Activated T-helper 1 cell treated with anti-CD3 and anti-CD28 coated beads, Interleukin-12 subunit alpha, Interleukin-12 subunit beta, Interleukin-2, Interleukin-4 antibody, amounts not matched to agents 30 ng/mL and 10 ng/mL and 1 ng/mL, durations not matched to agents 14 hours and 24 hours and 36 hours (primary cell): ENCODE measurements at regions of chr16 and their contacts with region 1.

Region 1: GRCh38 chr16:77236063-77236511 is 36.9 kb downstream of the SYCE1L start:
- DNase-seq: peak; percentile 79
- H3K4me3 Mint-ChIP-seq: peak overlapping the region; percentile 20
- H3K27ac Mint-ChIP-seq: no peak overlapping the region
- H3K4me1 Mint-ChIP-seq: peaks cover 6% of the 10 kb centered on the region
- H3K27me3 Mint-ChIP-seq: peaks cover 13% of the 10 kb centered on the region

Region 2: DNA sequence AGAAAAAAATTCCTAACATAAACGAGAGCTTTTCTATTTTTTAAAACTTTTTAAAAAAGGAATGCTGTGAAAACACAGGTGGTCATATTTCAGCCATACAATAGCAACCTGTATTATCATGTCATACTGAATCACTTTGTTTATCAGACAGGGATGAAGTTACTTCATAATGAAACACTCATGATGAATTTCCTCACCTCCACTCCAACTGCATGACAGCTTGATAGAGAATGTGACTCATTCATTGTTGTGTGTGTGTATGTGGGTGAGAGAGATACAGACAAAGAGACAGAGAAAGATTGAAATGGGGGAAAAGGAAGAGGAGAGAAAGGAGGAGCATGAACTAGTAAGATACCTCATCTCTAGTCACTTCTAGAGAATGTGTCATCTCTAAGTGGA is 72.1 kb after region 1 on chr16:
- intact Hi-C with region 1: loop called (anchors 1 kb)
- DNase-seq: no peak
- H3K4me3 Mint-ChIP-seq: no peak overlapping the region
- H3K27ac Mint-ChIP-seq: peak overlapping the region; percentile 45
- H3K4me1 Mint-ChIP-seq: peaks cover 9% of the 10 kb centered on the region
- H3K27me3 Mint-ChIP-seq: no peaks in the 10 kb centered on the region

Region 3: GRCh38 chr16:77437859-77438258 is 201.8 kb after region 1 on chr16:
- intact Hi-C with region 1: loop called (anchors 5 kb)
- DNase-seq: no peak
- H3K4me3 Mint-ChIP-seq: no peak overlapping the region
- H3K27ac Mint-ChIP-seq: no peak overlapping the region
- H3K4me1 Mint-ChIP-seq: no peaks in the 10 kb centered on the region
- H3K27me3 Mint-ChIP-seq: peaks cover 29% of the 10 kb centered on the region

Region 4: DNA sequence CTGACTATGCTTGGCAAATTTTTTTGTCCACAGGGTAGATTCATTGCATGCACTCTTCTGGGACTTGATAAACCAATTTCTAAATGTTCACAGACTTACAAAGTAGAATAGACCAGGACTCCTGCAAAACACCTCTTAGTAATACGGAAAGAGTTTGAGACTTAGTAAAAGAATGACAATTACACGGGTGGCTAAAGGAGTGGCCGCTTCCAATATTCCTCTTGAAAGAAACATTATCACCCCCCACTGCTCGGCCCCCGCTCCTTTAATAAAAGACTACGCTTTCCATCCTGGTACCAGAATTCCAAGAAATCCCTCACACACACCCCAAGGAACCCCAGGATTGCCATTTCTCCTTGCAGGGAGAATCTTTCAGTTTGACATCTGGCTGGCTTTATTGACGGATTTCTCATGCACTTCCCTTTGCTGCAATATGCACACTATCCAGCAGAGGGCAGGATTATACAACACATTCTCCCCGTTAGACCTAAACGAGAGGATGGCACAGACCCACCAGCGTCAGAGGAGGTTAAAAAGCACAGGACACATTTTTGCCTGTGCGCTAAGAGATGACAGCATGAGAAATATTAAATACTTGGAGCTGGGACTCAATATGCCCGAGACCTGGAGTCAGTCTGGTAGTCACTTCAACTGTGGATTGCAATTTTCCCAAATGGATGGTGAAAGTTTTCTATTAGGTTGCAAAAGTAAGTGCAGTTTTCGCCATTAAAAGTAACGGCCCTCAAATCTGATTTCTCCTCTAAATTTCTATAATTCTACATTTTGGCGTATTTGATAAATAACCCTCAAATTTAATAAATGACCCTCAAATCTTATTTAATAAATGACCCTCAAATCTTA is 439.6 kb after region 1 on chr16:
- intact Hi-C with region 1: loop called (anchors 10 kb)
- DNase-seq: peak; percentile 36
- H3K4me3 Mint-ChIP-seq: no peak overlapping the region
- H3K27ac Mint-ChIP-seq: no peak overlapping the region
- H3K4me1 Mint-ChIP-seq: no peaks in the 10 kb centered on the region
- H3K27me3 Mint-ChIP-seq: peaks cover 7% of the 10 kb centered on the region